ENCODE measurements at regions of chrX and their contacts with region 1.

Region 1: DNA sequence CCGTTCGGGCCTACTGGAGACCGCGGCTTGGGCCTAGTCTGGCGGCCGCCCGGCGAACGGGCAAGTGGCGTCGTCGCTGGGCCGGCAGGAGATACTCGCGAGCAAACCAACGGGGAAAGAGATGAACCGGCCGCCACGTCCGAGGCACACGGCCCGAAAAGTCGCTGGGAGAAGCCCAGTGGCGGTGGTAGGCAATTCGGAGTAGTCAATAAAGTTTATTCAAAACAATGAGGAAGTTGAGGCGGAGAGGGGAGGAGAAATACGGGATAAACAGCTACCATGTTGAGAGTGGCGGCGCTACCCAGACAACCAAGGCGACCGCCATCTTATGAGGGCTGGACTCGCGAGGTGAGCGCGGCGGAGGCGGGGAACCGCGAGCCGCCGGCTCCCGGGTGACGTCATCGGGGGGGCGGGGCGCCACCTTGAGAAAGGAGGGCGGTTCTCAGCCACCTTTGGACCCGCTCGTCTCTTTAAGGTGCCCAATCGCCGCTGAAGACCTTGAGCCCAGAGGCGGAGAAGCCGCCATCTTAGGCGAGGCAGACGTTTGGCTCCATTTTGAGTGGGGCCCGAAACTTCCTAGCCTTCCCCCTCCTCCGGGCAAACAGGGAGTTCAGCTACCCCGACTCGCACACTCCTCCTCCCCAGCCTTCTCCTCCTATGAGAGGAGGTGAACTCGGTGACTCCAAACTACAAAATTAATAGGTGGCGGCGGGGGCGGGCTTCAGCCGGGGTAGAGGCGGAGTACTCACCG is at the start of gene PHF8:
- DNase-seq: peak; percentile 96 to 97
- ATAC-seq: peak; percentile 96
- H3K4me3 ChIP-seq: peak within 1 kb of the TSS; percentile 67 to 96
- H3K27ac ChIP-seq: peak within 1 kb of the TSS; percentile 7 to 93
- H3K4me1 ChIP-seq: no peaks in the 10 kb centered on the region
- H3K27me3 ChIP-seq: no peaks in the 10 kb centered on the region
- total RNA-seq, gene PHF8: 34.2 to 39.7 TPM

Region 2: GRCh38 chrX:54182864-54183608 is 138.7 kb after region 1 on chrX and contains the start of gene FAM120C:
- intact Hi-C with region 1: loop called (anchors 5 kb)
- DNase-seq: peak; percentile 76 to 88
- ATAC-seq: peak; percentile 93
- H3K4me3 ChIP-seq: peak within 1 kb of the TSS; percentile 46 to 90
- H3K27ac ChIP-seq: peak within 1 kb of the TSS in 1 of 2 donors; percentile 83
- H3K4me1 ChIP-seq: no peaks in the 10 kb centered on the region
- H3K27me3 ChIP-seq: no peaks in the 10 kb centered on the region
- total RNA-seq, gene FAM120C: 10.1 to 14.1 TPM

Region 3: GRCh38 chrX:54439967-54440871 is 395.9 kb after region 1 on chrX and contains the start of gene TSR2:
- intact Hi-C with region 1: loop called in 1 of 2 experiments (anchors 10 kb)
- DNase-seq: peak; percentile 86 to 90
- ATAC-seq: peak; percentile 95
- H3K4me3 ChIP-seq: peak within 1 kb of the TSS; percentile 65 to 79
- H3K27ac ChIP-seq: no peak within 1 kb of the TSS
- H3K4me1 ChIP-seq: no peaks in the 10 kb centered on the region
- H3K27me3 ChIP-seq: no peaks in the 10 kb centered on the region
- total RNA-seq, gene TSR2: 39.5 to 42.7 TPM

Region 4: DNA sequence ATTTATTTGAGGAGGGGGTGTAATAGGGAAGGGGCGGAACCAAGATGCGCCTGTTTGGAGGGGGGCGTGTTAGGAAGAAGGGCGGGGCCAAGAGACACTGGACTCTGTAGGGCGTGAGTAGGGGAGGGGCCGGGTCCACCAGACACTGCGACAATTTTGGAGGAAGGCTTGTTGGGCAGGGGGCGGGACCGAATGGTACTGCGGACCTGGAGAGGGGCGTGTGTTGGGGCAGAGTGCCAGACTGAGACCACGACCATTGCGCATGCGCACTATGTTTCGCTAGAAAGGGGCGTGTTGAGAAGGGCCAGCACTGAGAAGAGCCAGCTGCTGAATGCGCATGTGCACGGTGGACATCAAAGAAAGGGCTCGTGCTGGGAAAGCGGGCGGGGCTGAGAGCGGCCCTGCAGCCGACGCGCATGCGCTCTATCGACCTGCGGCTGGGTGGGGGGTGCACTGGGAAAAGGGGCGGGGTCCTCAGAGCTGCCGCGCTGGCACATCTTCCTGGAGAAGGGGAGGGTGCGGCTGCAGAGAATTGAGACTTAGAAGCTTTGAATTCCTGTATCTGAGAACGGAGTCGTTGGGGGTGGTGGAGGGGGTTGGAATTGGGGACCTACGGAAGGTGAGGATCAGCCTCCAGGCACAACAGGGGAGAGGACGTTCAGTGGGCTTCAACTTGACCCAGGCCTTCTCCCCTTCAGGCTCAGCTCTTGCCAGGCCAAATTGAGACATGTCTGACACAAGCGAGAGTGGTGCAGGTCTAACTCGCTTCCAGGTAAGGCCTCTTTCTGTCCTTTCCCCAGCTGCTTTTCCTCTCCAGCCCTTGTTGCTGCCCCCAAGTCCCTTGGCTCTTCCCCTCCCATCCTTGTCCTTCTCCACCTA is 764.5 kb after region 1 on chrX:
- intact Hi-C with region 1: loop called in 1 of 2 experiments (anchors 10 kb)
- DNase-seq: peak; percentile 95 to 96
- ATAC-seq: peak; percentile 93
- H3K4me3 ChIP-seq: peak overlapping the region; percentile 8 to 41
- H3K27ac ChIP-seq: peak overlapping the region in 1 of 2 donors; percentile 39
- H3K4me1 ChIP-seq: no peaks in the 10 kb centered on the region
- H3K27me3 ChIP-seq: no peaks in the 10 kb centered on the region